CD14-positive monocyte (primary cell): ENCODE measurements at regions of chr17 and their contacts with region 1.

Region 1: GRCh38 chr17:80426681-80427326 is 11.8 kb downstream of the ENDOV start:
- DNase-seq: peak; percentile 63 to 79 (median 69)
- H3K4me3 ChIP-seq: no peak overlapping the region
- H3K4me3 Mint-ChIP-seq: no peak overlapping the region
- H3K27ac ChIP-seq: no peak overlapping the region
- H3K27ac Mint-ChIP-seq: peak overlapping the region in 1 of 7 donors; percentile 46
- H3K4me1 ChIP-seq: no peaks in the 10 kb centered on the region
- H3K4me1 Mint-ChIP-seq: peaks cover 2% of the 10 kb centered on the region
- H3K27me3 ChIP-seq: no peaks in the 10 kb centered on the region
- H3K27me3 Mint-ChIP-seq: peaks cover 5 to 10% (median 8%) of the 10 kb centered on the region in 3 donors
- CTCF ChIP-seq: peak; percentile 93

Region 2: DNA sequence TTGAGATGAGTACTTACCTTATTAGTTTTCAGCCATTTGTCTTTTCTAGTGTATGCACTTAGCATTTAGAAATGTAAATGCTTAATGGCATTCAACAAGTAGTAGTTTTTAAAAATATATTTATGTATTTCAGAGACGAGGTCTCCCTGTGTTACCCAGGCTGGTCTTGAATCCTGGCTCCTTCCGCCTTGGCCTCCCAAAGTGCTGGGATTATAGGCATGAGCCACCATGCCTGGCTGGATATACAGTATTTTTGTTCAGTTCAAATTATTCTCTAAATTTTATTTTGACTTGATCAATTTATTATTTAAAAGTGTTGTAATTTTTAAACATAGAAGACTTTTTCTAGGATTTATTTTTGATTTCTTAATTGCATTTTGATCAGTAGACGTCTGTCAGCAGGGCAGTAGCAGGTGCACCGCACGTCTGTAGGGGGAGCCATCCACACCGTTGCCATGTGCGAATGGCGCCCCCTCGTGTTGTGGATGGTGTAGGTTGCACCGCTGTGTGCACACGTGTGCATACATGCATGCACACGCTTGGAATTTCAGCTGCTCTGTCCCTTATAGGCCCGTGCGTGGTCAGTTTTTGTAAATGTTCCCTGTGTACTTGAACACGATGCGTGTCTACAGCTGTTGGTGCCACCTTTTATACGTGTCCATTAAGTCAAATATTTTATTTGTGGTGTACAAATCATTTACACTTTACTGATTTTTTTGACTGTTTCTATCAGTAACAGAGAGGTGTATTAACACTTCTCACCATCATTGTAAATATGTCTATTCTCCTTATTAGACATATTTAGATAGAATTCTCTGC is 148.5 kb after region 1 on chr17:
- intact Hi-C with region 1: loop called (anchors 1 to 5 kb)
- DNase-seq: peak; percentile 82 to 86 (median 83)
- H3K4me3 ChIP-seq: no peak overlapping the region
- H3K4me3 Mint-ChIP-seq: no peak overlapping the region
- H3K27ac ChIP-seq: no peak overlapping the region
- H3K27ac Mint-ChIP-seq: no peak overlapping the region
- H3K4me1 ChIP-seq: no peaks in the 10 kb centered on the region
- H3K4me1 Mint-ChIP-seq: no peaks in the 10 kb centered on the region
- H3K27me3 ChIP-seq: no peaks in the 10 kb centered on the region
- H3K27me3 Mint-ChIP-seq: no peaks in the 10 kb centered on the region
- CTCF ChIP-seq: peak; percentile 100

Region 3: GRCh38 chr17:80899402-80900268 is 472.8 kb after region 1 on chr17:
- intact Hi-C with region 1: loop called in 1 of 2 experiments (anchors 5 kb)
- DNase-seq: peak; percentile 20 to 58 (median 54)
- H3K4me3 ChIP-seq: no peak overlapping the region
- H3K4me3 Mint-ChIP-seq: no peak overlapping the region
- H3K27ac ChIP-seq: no peak overlapping the region
- H3K27ac Mint-ChIP-seq: peak overlapping the region in 1 of 7 donors; percentile 37
- H3K4me1 ChIP-seq: no peaks in the 10 kb centered on the region
- H3K4me1 Mint-ChIP-seq: no peaks in the 10 kb centered on the region
- H3K27me3 ChIP-seq: no peaks in the 10 kb centered on the region
- H3K27me3 Mint-ChIP-seq: no peaks in the 10 kb centered on the region
- CTCF ChIP-seq: peak; percentile 88

Region 4: GRCh38 chr17:80981062-80981902 is 554.5 kb after region 1 on chr17:
- intact Hi-C with region 1: loop called (anchors 2 kb)
- DNase-seq: peak in 1 of 3 donors; percentile 22
- H3K4me3 ChIP-seq: no peak overlapping the region
- H3K4me3 Mint-ChIP-seq: peak overlapping the region in 1 of 2 donors; percentile 72
- H3K27ac ChIP-seq: no peak overlapping the region
- H3K27ac Mint-ChIP-seq: peak overlapping the region in 1 of 7 donors; percentile 53
- H3K4me1 ChIP-seq: peaks cover 1 to 7% of the 10 kb centered on the region in 2 donors
- H3K4me1 Mint-ChIP-seq: peaks cover 6% of the 10 kb centered on the region
- H3K27me3 ChIP-seq: peaks cover 0 to 3% of the 10 kb centered on the region in 2 donors
- H3K27me3 Mint-ChIP-seq: peaks cover 2 to 15% (median 12%) of the 10 kb centered on the region in 3 donors
- CTCF ChIP-seq: peak; percentile 99

Region 5: DNA sequence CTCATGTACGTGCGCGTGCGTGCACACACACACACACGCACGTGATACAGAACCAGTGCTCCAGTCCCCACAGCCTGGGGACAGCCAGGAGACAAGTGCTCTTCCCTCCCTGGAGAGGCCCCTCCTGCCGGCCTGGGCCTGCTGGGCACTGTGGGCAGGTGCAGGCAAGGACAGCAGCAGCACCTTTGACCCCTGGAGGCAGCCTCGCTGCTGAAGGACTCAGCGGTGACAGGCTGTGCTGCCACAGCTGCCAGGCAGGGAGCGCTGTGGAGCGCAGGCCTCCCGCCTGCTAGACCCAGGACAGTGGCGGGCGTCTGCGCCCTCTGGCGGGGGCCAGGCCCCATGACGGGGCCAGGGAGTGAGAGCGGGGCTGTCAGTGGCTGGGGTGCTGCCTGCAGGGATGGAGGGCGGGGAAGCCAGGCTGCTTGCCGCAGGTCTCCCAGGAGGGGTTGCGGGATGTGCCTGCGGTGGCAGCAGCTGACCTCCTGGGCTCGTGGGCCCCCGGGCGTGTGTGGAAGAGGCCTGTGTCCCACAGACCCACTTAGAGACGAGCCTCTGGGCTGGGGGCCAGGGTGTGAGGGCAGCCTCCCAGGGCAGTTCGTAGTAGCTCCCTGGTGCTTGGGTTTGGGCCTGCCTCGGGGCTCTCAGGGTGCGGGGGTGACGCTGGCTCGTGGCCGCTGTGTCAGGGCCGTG is 675.0 kb after region 1 on chr17:
- intact Hi-C with region 1: loop called (anchors 10 kb)
- DNase-seq: peak; percentile 83 to 89 (median 85)
- H3K4me3 ChIP-seq: no peak overlapping the region
- H3K4me3 Mint-ChIP-seq: no peak overlapping the region
- H3K27ac ChIP-seq: no peak overlapping the region
- H3K27ac Mint-ChIP-seq: no peak overlapping the region
- H3K4me1 ChIP-seq: peaks cover 16 to 21% of the 10 kb centered on the region in 2 donors
- H3K4me1 Mint-ChIP-seq: peaks cover 10% of the 10 kb centered on the region
- H3K27me3 ChIP-seq: no peaks in the 10 kb centered on the region
- H3K27me3 Mint-ChIP-seq: peaks cover under 1 to 5% (median 3%) of the 10 kb centered on the region in 3 donors
- CTCF ChIP-seq: peak; percentile 100